ENCODE measurements at regions of chr5 and their contacts with region 1.

Region 1: DNA sequence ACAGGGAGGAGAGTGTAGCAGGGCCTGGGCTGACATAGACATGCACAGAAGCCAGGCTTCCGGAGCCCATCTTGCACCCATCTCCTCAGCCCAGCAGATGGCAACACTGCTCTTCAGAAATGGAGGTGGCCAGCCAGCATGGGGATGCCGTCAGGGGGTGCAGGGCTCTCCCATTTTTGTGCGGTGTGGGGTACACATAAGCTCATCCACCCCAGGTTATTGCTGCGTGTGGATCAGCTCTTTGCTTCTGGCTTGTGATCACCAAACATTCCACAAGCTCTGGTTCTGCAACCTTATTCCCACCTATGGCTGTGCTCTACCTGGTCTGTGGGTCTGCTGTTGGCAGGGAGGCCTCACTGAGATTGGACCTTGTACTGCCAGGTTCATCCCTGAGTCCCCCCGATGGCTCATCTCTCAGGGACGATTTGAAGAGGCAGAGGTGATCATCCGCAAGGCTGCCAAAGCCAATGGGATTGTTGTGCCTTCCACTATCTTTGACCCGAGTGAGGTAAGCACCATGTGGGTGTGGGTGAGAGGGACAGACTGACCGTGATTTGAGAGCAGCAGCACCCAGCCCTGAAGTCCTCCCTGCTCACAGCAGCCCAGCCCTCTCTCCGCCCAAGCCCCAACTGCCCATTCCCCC is 17.3 kb downstream of the SLC22A5 start:
- DNase-seq: peak; percentile 79
- ATAC-seq: peak; percentile 84

Region 2: DNA sequence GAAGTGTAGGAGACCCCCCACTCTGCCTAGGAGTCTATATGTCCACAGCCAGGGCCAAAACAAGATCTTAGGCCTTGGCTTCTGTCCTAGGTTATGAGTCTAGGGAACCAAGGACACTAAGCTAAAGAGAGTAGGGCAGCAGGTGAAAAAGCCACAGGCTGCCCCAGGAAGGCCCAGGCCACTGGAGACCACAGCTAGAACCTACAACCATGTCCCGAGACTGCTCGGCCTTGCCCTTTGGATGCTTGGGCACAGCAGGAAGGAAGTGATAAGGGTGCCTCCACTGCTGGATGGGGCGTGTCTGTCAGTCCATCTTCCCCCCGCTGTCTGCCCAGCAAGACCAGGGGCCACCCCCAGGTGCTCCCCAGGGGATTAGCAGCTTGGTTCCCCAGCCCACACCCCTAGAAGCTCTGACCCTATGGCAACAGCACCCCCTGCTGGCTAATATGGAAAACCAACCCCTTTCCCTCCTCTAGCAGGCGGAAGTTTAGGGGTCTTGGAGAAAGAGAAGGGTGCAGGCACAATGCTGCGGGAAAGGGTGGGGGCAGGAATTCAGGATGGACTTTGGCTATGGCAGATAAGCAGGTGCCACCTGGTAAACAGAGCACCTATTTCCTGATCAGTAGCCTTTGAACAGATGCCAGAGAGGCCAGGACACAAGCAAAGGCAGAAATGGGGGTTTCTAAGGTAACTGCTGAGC is 114.3 kb after region 1 on chr5:
- intact Hi-C with region 1: loop called (anchors 2 kb)
- DNase-seq: peak; percentile 60
- ATAC-seq: peak; percentile 17

Region 3: GRCh38 chr5:132787076-132787475 is 400.3 kb after region 1 on chr5:
- intact Hi-C with region 1: no loop called
- DNase-seq: no peak
- ATAC-seq: no peak